Pancreas (tissue), 10 donors: ENCODE measurements at regions of chr22 and their contacts with region 1.

Region 1: GRCh38 chr22:33579448-33580093 is 340.7 kb downstream of the LARGE1 start:
- DNase-seq: peak; percentile 44 to 77 (median 54)
- ATAC-seq: peak; percentile 84 to 94 (median 90)
- H3K4me3 ChIP-seq: no peak overlapping the region
- H3K27ac ChIP-seq: peak overlapping the region in 2 of 4 donors; percentile 59 to 63
- H3K4me1 ChIP-seq: peaks cover 3 to 26% (median 22%) of the 10 kb centered on the region in 3 donors
- H3K27me3 ChIP-seq: no peaks in the 10 kb centered on the region
- CTCF ChIP-seq: peak; percentile 76 to 89 (median 80)

Region 2: GRCh38 chr22:33105501-33105911 is 474.1 kb before region 1 on chr22:
- intact Hi-C with region 1: no loop called
- DNase-seq: no peak
- ATAC-seq: no peak
- H3K4me3 ChIP-seq: no peak overlapping the region
- H3K27ac ChIP-seq: no peak overlapping the region
- H3K4me1 ChIP-seq: no peaks in the 10 kb centered on the region
- H3K27me3 ChIP-seq: no peaks in the 10 kb centered on the region
- CTCF ChIP-seq: no peak

Region 3: GRCh38 chr22:33302049-33302545 is 277.5 kb before region 1 on chr22:
- intact Hi-C with region 1: loop called in 1 of 3 experiments (anchors 10 kb)
- DNase-seq: peak; percentile 56 to 92 (median 80)
- ATAC-seq: peak; percentile 92 to 98 (median 97)
- H3K4me3 ChIP-seq: no peak overlapping the region
- H3K27ac ChIP-seq: no peak overlapping the region
- H3K4me1 ChIP-seq: peaks cover 0 to 4% (median 0%) of the 10 kb centered on the region in 3 donors
- H3K27me3 ChIP-seq: no peaks in the 10 kb centered on the region
- CTCF ChIP-seq: peak; percentile 78 to 94 (median 88)

Region 4: DNA sequence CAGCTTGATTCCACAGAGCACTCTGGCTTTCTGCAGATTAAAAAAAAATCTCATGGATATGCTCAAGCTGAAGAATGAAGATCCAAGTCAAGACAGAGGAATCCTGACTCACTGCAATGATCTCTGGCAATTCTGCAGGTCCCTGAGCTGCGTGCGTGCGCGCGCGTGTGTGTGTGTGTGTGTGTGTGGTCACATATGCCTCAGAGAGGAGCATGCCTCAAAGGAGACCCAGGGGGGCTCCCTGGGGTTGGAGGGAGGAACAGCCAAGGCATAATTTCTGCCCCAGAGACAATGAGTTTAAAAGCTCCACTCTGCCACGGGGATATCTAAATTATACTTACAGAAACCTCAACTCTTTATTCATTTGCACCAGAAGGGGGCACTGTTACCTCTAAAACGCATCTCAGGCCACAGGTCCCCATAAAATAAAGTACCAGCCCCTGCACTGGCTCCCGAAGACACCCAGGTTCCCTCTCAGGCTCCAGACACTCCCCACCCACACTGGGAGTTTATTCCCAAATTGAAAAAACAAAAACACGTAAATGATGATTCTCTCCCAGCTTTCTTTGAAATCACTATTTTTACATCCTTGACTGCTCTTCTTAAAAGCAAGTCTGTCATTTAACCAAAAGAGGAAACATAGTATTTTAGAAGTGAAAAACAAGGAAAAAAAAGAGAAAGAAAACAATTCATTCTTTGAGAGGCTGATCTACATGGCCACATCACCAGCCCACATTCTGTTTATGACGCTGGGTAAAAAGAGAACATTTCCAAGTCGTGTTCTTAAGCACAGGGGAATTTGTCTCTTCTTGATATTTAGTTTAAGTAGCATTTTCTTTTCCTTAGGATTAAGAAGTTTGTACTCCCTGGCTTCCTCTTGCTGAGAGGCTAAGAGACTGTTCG is 60.2 kb before region 1 on chr22:
- intact Hi-C with region 1: loop called in 2 of 3 experiments (anchors 2 to 10 kb)
- DNase-seq: peak in 2 of 6 donors; percentile 23 to 49
- ATAC-seq: peak; percentile 52 to 86 (median 82)
- H3K4me3 ChIP-seq: no peak overlapping the region
- H3K27ac ChIP-seq: no peak overlapping the region
- H3K4me1 ChIP-seq: no peaks in the 10 kb centered on the region
- H3K27me3 ChIP-seq: no peaks in the 10 kb centered on the region
- CTCF ChIP-seq: peak; percentile 19 to 60 (median 48)

Region 5: DNA sequence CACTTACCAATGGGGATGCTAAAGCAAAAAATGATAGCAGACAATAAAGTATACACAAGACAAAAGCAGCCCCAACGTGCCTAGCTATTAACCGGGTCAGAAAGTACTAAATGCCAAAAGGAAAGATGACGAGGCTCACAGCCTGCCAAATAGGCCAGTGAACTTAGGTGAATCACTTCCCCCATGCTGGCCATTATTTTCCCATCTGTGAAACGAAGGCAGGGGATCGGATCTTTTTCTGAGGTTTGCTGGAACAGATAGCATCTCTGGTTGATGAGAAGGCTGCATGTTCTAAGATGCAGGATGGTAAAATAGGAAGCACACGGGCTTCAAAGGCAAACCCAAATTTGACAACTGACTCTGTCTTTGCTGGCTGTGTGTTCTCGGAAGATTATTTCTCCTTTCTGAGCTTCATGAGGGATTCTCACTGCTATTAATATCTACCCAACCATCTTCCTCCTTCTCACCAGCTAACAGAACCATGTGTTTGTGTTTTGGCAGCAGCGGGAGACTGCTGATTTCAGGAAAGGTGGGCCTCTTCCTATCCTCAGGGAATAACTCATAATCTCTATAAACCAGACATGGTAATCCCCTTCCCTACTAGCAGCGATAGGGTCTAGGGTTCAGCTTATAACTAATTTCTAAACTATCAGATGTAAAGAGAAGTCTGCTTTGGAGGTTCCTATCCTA is 50.0 kb before region 1 on chr22:
- intact Hi-C with region 1: loop called in 1 of 3 experiments (anchors 10 kb)
- DNase-seq: no peak
- ATAC-seq: peak in 1 of 4 donors; percentile 28
- H3K4me3 ChIP-seq: no peak overlapping the region
- H3K27ac ChIP-seq: no peak overlapping the region
- H3K4me1 ChIP-seq: peaks cover 0 to 6% (median 0%) of the 10 kb centered on the region in 3 donors
- H3K27me3 ChIP-seq: no peaks in the 10 kb centered on the region
- CTCF ChIP-seq: no peak